Posterior cingulate gyrus (tissue), 11 donors: ENCODE measurements at regions of chr13 and their contacts with region 1.

Region 1: GRCh38 chr13:50081679-50082425 is 66.6 kb downstream of the KCNRG start:
- DNase-seq: peak; percentile 98 to 100 (median 99)

Region 2: GRCh38 chr13:48580185-48580803 is 1501.6 kb before region 1 on chr13:
- intact Hi-C with region 1: no loop called
- DNase-seq: peak in 5 of 10 donors; percentile 34 to 78 (median 63)

Region 3: DNA sequence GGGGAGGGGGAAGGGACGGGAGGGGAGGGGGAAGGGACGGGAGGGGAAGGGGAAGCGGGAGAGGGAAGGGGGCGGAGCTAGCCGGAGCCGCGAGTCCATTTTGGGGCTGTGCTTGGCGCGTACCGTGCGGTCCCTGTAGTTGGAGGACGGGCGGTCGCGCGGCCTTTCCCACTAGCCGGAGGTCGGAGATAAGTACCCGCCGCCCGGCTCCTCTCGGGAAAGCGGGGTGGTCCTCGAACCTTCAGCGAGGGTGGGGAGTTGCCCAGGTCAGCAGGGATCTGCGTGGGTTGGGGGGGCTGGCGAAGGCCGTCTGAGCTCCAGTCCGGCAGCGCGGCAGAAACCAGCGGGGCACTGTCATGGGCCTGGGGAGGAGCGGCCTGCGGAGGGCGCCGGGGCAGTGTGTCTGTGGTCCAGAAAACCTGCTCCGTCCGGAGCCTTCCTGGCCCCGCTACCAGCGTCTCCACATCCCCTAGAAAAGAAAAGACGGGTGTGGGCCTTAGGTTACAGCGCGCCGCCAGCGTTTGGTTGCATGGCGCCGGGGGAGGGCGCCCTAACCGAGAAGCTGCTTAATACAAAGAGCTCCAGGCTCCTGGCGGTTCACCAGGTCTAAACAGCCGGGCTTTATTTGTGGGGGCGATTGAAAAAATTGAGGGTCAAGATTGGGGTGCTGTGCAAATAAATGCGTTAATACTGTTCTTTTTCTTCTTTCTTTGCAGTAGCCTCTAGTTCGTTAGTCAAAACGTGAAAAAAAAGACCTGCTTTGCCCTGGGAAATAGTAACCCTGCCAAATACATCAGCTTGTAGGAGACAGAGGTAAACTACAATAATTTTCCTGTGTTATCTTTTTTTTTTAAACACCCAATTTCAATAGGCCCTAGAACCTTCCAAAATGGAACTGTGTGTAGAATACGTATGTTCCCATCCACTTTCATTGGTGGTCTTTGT is 84.6 kb before region 1 on chr13 and contains the start of gene TRIM13:
- intact Hi-C with region 1: loop called (anchors 2 kb)
- DNase-seq: peak; percentile 80 to 98 (median 88)

Region 4: GRCh38 chr13:50123862-50124536 is 42.1 kb after region 1 on chr13:
- intact Hi-C with region 1: loop called (anchors 1 kb)
- DNase-seq: peak in 8 of 10 donors; percentile 34 to 99 (median 84)

Region 5: GRCh38 chr13:50801087-50801931 is 719.5 kb after region 1 on chr13:
- intact Hi-C with region 1: loop called (anchors 2 kb)
- DNase-seq: peak in 6 of 10 donors; percentile 18 to 85 (median 65)

Region 6: GRCh38 chr13:51070005-51070649 is 988.3 kb after region 1 on chr13:
- intact Hi-C with region 1: loop called (anchors 10 kb)
- DNase-seq: peak; percentile 65 to 98 (median 90)